ENCODE measurements at regions of chr10 and their contacts with region 1.

Region 1: DNA sequence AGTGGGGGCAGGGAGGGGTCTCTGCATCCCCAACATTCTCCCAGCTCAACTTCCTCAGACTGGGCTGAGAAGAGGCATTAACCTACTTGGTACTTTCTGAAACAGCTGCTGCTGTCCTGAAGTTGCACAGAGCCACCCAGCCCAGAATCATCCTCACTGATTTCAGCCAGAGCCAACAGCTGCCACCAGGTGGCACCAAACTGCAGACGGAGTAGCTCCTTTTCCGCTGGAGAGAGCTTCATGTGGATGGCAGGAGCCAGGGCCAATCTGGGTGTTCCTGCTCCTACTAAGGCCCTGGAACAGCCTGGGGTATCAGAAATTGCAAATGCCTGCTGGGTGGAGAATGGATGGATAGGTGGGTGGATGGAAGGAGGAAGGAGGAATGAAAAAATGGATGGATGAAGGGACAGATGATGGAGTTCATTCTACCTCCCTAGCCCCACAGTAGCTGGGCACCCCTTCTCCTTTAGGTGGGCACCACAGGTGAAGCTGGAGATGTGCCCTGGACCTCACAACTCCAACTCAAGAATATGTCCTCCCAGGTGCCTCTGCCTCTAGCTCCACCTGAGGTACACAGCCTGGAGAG is 11.8 kb upstream of the DRGX start:
- DNase-seq: peak in 1 of 2 experiments; percentile 92
- H3K4me3 ChIP-seq: no peak overlapping the region
- H3K27ac ChIP-seq: no peak overlapping the region
- H3K4me1 ChIP-seq: peaks cover 0 to 11% (median 4%) of the 10 kb centered on the region in 4 experiments; a peak in 4 of 7 replicates
- H3K27me3 ChIP-seq: peaks cover 0 to 9% (median 0%) of the 10 kb centered on the region in 4 experiments; a peak in 2 of 7 replicates
- CTCF ChIP-seq: peak; percentile 94 to 97 (median 94)
- EP300 ChIP-seq: no peak
- POLR2A ChIP-seq: no peak
- RAD21 ChIP-seq: peak; percentile 86 to 92

Region 2: GRCh38 chr10:49298671-49298982 is 109.0 kb before region 1 on chr10:
- CTCF ChIA-PET with region 1: interaction called, 16 read pairs
- POLR2A ChIA-PET with region 1: no interaction called
- DNase-seq: no peak
- H3K4me3 ChIP-seq: no peak overlapping the region
- H3K27ac ChIP-seq: no peak overlapping the region
- H3K4me1 ChIP-seq: peaks cover 0 to 16% (median 5%) of the 10 kb centered on the region in 4 experiments; a peak in 6 of 7 replicates
- H3K27me3 ChIP-seq: no peaks in the 10 kb centered on the region
- CTCF ChIP-seq: no peak
- EP300 ChIP-seq: no peak
- POLR2A ChIP-seq: no peak
- RAD21 ChIP-seq: no peak

Region 3: GRCh38 chr10:49362596-49363260 is 44.9 kb before region 1 on chr10:
- CTCF ChIA-PET with region 1: interaction called, 14 read pairs
- POLR2A ChIA-PET with region 1: no interaction called
- DNase-seq: no peak
- H3K4me3 ChIP-seq: no peak overlapping the region
- H3K27ac ChIP-seq: no peak overlapping the region
- H3K4me1 ChIP-seq: peaks cover 0 to 10% (median 7%) of the 10 kb centered on the region in 4 experiments; a peak in 5 of 7 replicates
- H3K27me3 ChIP-seq: no peaks in the 10 kb centered on the region
- CTCF ChIP-seq: no peak
- EP300 ChIP-seq: no peak
- POLR2A ChIP-seq: no peak
- RAD21 ChIP-seq: no peak

Region 4: DNA sequence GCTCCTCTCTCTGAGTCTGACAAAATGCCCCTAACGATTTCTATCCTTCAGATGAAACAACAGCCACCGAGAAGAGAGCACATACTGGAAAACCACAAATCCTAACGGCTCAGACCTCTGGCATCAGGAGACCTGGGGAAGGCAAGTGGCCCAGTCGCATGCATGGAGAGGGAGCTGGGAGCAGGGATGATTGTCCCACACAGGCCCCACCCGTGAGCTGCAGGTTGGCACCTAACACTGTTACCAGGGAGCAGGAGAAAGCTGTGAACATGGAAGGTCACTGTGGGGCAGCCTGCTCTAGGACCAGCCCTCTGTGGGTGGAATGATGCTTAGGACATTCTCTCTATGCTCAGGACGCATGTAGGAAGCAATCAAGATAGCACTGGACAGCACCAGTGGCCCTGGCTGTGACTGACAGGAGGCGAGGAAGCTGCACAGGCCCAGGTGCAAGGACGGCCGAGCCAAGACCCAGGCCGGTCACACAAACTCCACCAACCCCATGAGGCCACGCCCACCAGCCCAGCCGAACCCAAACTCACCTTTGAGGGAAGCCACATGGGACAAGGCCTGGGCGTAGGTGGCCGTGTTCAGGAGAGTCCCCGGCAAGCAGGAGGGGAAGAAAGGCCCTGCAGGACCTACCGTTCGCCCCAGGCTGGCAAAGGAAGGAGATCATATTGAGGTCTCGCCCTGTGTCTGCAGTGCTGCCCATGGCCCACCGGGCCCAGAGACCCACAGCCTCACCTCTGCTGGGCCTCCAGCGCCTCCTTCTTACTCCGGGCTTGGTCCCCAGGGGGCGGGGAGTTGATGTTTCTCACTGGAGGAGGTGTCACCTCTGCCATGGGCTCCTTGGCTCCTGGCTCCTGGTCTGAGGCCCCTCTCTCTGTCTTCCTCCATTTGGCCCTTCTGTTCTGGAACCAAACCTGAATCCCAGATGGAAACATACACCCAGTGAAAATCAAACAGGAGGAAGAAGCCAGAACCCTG is 21.4 kb before region 1 on chr10:
- CTCF ChIA-PET with region 1: interaction called, 30 read pairs
- POLR2A ChIA-PET with region 1: no interaction called
- DNase-seq: no peak
- H3K4me3 ChIP-seq: no peak overlapping the region
- H3K27ac ChIP-seq: no peak overlapping the region
- H3K4me1 ChIP-seq: no peaks in the 10 kb centered on the region; a peak in 1 of 7 replicates
- H3K27me3 ChIP-seq: peaks cover 0 to 3% (median 1%) of the 10 kb centered on the region in 4 experiments; a peak in 1 of 7 replicates
- CTCF ChIP-seq: no peak
- EP300 ChIP-seq: no peak
- POLR2A ChIP-seq: no peak
- RAD21 ChIP-seq: no peak

Region 5: DNA sequence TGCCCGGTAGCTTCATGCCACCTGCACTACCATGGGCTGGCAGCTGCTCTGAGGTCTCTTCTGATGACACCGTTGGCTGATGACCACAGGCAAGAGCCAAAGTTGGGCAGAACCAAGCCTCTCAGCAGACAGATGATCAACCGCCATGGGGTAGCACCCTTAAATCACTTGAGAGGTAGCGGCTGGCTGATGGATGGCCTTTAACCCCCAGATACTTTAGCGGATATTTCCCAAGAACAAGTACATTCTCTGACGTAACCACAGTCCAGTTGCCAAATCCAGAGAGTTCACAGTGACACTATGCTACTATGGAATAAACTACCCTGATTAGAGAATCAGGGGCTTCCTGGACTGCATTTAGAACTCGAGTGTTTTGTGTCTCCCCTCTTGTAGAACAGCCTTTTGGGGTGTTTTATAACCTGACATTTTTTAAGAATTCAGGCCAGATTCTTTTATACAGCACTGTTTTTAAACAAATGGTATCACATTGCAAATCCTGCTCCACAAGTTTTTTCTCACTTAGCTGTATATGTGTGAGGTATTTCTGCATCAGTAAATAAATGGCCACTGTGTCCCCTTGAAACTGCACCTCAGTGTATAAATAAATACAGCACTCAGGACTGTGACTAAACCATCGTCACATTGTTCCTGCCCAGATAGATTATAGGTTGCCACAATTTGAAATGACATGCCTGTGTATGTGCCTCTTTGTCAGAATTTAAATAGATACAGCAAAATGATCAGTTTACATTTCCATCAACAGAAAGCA is 19.1 kb after region 1 on chr10:
- CTCF ChIA-PET with region 1: interaction called, 13 read pairs
- POLR2A ChIA-PET with region 1: interaction called, 3 read pairs
- DNase-seq: no peak
- H3K4me3 ChIP-seq: no peak overlapping the region
- H3K27ac ChIP-seq: no peak overlapping the region
- H3K4me1 ChIP-seq: no peaks in the 10 kb centered on the region
- H3K27me3 ChIP-seq: no peaks in the 10 kb centered on the region
- CTCF ChIP-seq: no peak
- EP300 ChIP-seq: no peak
- POLR2A ChIP-seq: no peak
- RAD21 ChIP-seq: no peak

Region 6: GRCh38 chr10:49500418-49500817 is 92.8 kb after region 1 on chr10:
- CTCF ChIA-PET with region 1: interaction called, 19 read pairs
- POLR2A ChIA-PET with region 1: no interaction called
- DNase-seq: no peak
- H3K4me3 ChIP-seq: no peak overlapping the region
- H3K27ac ChIP-seq: no peak overlapping the region
- H3K4me1 ChIP-seq: no peaks in the 10 kb centered on the region
- H3K27me3 ChIP-seq: no peaks in the 10 kb centered on the region
- CTCF ChIP-seq: no peak
- EP300 ChIP-seq: no peak
- POLR2A ChIP-seq: no peak
- RAD21 ChIP-seq: no peak

Region 7: DNA sequence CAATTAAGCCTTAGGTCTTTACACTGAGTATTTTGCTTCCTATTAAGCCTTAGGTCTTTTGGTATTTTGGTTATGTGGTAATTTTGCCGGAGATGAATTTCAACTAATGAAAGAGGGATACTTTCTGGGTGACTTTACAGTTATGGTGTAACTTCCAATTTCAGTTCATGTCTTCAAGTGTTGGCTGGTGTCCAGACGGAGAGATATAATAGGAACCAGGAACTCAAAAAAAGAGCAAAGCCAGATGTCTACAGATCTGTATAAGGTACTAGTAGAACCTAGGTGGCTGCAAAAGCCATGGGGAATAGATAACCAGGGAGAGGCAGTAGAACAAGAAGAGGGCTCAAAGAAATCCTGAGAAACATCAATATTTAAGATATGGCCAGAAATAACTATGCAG is 119.0 kb after region 1 on chr10:
- CTCF ChIA-PET with region 1: interaction called, 18 read pairs
- POLR2A ChIA-PET with region 1: no interaction called
- DNase-seq: no peak
- H3K4me3 ChIP-seq: no peak overlapping the region
- H3K27ac ChIP-seq: no peak overlapping the region
- H3K4me1 ChIP-seq: no peaks in the 10 kb centered on the region; a peak in 1 of 7 replicates
- H3K27me3 ChIP-seq: no peaks in the 10 kb centered on the region
- CTCF ChIP-seq: no peak
- EP300 ChIP-seq: no peak
- POLR2A ChIP-seq: no peak
- RAD21 ChIP-seq: no peak